ENCODE measurements at regions of chr1 and their contacts with region 1.

Region 1: DNA sequence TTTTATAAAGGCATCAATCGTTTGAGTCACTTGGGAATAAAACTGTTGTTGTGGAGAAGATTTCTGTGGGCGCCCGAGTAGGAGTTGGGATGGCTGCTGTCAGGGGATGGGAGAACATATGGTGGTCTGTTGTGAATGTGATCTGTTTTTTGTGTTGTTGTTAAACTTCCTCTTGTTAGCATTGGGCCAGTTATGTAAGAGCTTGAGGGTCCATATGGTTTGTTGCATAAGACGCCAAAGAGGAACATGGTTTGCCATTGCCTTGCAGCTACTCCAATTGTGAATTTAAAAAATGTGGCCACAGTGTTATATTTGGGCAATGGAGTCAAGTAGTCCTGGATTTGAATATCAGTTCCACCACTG is 136.1 kb upstream of the JUN start:
- DNase-seq: no peak
- ATAC-seq: no peak
- H3K4me3 ChIP-seq: no peak overlapping the region
- H3K27ac ChIP-seq: no peak overlapping the region
- H3K4me1 ChIP-seq: peaks cover 2% of the 10 kb centered on the region; the same call in 1 of the 2 replicates
- H3K27me3 ChIP-seq: no peaks in the 10 kb centered on the region
- CTCF ChIP-seq: no peak
- POLR2A ChIP-seq: no peak
- RAD21 ChIP-seq: no peak

Region 2: GRCh38 chr1:58802638-58803399 is 117.1 kb before region 1 on chr1:
- CTCF ChIA-PET with region 1: no interaction called
- POLR2A ChIA-PET with region 1: no interaction called
- dilution Hi-C with region 1: no loop called
- in situ Hi-C with region 1: no loop called
- intact Hi-C with region 1: no loop called
- DNase-seq: no peak
- ATAC-seq: no peak
- H3K4me3 ChIP-seq: no peak overlapping the region
- H3K27ac ChIP-seq: no peak overlapping the region
- H3K4me1 ChIP-seq: peaks cover 2% of the 10 kb centered on the region; the same call in 1 of the 2 replicates
- H3K27me3 ChIP-seq: no peaks in the 10 kb centered on the region; the same call in 1 of the 2 replicates
- CTCF ChIP-seq: no peak
- POLR2A ChIP-seq: no peak
- RAD21 ChIP-seq: no peak

Region 3: GRCh38 chr1:58950897-58951296 is 31.0 kb after region 1 on chr1:
- CTCF ChIA-PET with region 1: no interaction called
- POLR2A ChIA-PET with region 1: no interaction called
- dilution Hi-C with region 1: no loop called
- in situ Hi-C with region 1: no loop called
- intact Hi-C with region 1: loop called (anchors 2 kb)
- DNase-seq: no peak
- ATAC-seq: no peak
- H3K4me3 ChIP-seq: no peak overlapping the region
- H3K27ac ChIP-seq: no peak overlapping the region
- H3K4me1 ChIP-seq: no peaks in the 10 kb centered on the region
- H3K27me3 ChIP-seq: no peaks in the 10 kb centered on the region
- CTCF ChIP-seq: no peak
- POLR2A ChIP-seq: no peak
- RAD21 ChIP-seq: no peak

Region 4: GRCh38 chr1:58982259-58982998 is 62.5 kb after region 1 on chr1:
- CTCF ChIA-PET with region 1: no interaction called
- POLR2A ChIA-PET with region 1: no interaction called
- dilution Hi-C with region 1: no loop called
- in situ Hi-C with region 1: no loop called
- intact Hi-C with region 1: loop called (anchors 5 kb)
- DNase-seq: no peak
- ATAC-seq: no peak
- H3K4me3 ChIP-seq: no peak overlapping the region
- H3K27ac ChIP-seq: no peak overlapping the region
- H3K4me1 ChIP-seq: peaks cover 7% of the 10 kb centered on the region; the same call in 1 of the 2 replicates
- H3K27me3 ChIP-seq: no peaks in the 10 kb centered on the region; the same call in 1 of the 2 replicates
- CTCF ChIP-seq: no peak
- POLR2A ChIP-seq: no peak
- RAD21 ChIP-seq: no peak

Measured in IMR-90 (cell line).